B cell (primary cell): ENCODE measurements at regions of chr11 and their contacts with region 1.

Region 1: DNA sequence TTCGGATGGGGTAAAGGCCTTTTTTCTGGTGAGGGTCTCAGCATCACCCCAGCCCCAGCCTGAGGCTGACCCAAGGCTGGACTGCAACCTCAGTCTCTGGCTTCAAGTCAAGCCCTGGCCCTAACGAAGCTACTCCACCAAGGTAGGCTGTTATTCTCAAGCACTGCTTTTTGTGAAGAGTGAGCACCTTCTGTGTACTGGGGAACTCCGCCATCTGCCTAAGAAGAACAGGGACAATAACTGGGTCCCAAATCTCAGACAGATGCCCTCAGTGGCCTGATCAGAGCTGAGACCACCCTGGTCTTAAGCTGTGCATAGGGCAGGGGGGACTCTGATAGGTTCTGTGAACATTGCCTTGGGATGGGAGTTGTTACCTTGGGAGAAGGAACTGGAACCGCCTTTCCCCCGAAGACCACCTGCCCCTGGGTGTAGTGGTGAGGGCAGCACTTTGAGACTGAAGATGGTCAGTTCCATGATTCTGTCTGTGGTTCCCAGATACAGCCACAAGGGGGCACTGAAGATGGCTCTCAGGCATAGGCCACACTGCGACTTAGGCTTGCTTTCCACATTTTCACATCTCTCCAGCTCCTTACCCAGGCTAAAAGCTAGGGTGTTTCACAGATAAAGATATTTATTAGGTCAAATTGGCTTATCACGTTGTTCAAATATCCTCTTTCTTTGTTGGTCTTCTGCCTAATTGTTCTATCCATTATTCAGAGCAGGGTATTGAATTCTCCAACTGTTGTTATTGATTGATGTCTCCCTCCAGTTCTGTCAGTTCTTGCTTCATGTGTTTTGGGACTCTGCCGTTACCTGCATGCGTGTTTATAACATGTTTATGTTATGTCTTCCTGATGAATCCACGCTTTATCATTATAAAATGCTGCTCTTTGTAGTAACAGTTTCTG is 11.8 kb upstream of the UVRAG start:
- DNase-seq: peak; percentile 82
- ATAC-seq: peak; percentile 94
- H3K4me3 ChIP-seq: no peak overlapping the region
- H3K4me3 Mint-ChIP-seq: no peak overlapping the region
- H3K27ac ChIP-seq: no peak overlapping the region
- H3K27ac Mint-ChIP-seq: peak overlapping the region; percentile 32
- H3K4me1 ChIP-seq: peaks cover 3 to 22% of the 10 kb centered on the region in 2 donors
- H3K4me1 Mint-ChIP-seq: peaks cover 17% of the 10 kb centered on the region
- H3K27me3 ChIP-seq: no peaks in the 10 kb centered on the region
- H3K27me3 Mint-ChIP-seq: no peaks in the 10 kb centered on the region
- CTCF ChIP-seq: peak; percentile 96

Region 2: DNA sequence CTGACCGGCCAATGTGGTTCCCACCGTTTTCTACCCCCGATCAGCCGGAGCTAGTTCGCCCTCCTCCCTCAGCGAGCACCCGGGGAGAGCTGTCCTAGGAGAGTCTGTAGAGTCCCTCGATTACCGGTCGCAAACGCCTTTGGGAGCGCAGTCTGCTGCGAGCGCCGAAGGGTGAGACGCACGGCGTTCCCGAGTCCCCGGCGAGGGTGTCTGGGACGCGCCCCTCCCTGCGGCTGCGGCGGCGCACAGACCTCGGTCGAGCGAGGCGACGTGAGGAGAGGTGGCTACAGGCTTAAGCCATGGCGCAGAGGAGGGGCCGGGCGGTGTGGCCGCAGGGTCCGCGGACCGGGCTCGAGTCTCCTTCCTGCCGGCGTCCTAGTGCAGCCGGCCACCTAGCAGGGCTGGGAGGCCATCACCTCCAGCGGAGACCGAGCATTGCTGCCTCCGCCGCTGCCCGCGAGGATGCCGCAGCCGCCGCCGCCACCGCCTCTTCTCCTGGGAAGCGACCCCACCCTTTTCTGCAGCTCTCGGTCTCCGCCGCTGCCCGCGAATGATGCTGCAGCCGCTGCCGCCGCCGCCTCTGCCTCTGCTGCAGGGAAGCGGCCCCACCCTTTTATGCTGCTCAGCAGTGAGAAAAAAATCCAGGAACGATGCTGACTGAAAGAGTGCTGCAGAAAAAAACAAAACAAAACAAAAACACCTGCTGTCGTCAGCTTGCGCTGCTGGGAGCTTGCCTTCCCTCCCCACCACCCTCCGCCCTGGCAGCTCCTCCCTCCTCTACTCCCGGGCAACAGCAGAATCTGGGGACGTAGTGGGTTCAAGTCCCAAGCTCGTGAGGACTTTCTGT is 134.5 kb before region 1 on chr11 and contains the start of gene MAP6:
- CTCF ChIA-PET with region 1: no interaction called
- POLR2A ChIA-PET with region 1: no interaction called
- intact Hi-C with region 1: no loop called
- DNase-seq: peak; percentile 51
- ATAC-seq: peak; percentile 26
- H3K4me3 ChIP-seq: peak within 1 kb of the TSS in 4 of 5 experiments; percentile 34 to 76 (median 50)
- H3K4me3 Mint-ChIP-seq: peak within 1 kb of the TSS; percentile 94
- H3K27ac ChIP-seq: no peak within 1 kb of the TSS
- H3K27ac Mint-ChIP-seq: peak within 1 kb of the TSS; percentile 47
- H3K4me1 ChIP-seq: peaks cover 16 to 22% of the 10 kb centered on the region in 2 donors
- H3K4me1 Mint-ChIP-seq: peaks cover 13% of the 10 kb centered on the region
- H3K27me3 ChIP-seq: peaks cover 0 to 59% (median 43%) of the 10 kb centered on the region in 4 experiments
- H3K27me3 Mint-ChIP-seq: peaks cover 67% of the 10 kb centered on the region
- CTCF ChIP-seq: no peak
- total RNA-seq, gene MAP6: 0.34 and 0.57 TPM in 2 replicates

Region 3: DNA sequence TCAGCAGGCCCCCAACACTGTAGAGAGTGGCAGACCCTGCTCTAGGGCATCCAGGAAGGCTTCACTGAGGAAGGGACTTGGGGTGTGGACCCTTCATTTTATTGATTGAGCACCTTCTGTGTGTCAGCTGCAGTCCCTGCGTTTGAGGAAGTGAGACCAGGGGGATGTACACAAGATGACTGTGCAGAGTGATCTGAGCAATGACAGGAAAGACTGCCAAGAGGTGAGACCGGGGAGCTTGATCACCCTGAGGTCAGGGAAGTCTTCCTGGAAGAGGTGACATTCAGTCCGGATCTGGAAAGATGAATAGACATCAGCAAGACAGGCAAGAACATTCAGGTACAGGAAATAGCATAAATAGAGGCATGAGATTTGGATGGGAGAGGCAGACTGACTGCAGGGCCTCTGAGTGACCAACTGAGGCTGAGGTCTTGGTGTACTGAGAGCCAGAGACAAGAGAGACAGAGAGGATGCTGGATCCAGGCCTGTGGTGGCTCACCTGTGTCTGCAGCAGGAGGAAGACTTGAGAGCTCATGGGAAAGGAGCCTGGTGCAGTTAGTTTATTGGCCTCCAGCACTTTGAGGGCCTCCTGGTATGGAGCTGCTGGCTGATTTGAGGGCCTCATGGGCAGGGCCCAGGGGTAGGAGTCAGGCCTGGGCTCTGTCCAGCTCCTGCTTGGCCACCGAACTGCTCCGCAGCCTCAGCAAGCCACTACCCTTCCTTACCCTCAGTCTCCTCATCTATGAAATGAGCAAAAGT is 29.4 kb before region 1 on chr11:
- CTCF ChIA-PET with region 1: interaction called, 9 read pairs
- POLR2A ChIA-PET with region 1: no interaction called
- intact Hi-C with region 1: loop called (anchors 2 kb)
- DNase-seq: peak; percentile 84
- ATAC-seq: peak; percentile 76
- H3K4me3 ChIP-seq: peak overlapping the region in 1 of 5 experiments; percentile 37
- H3K4me3 Mint-ChIP-seq: peak overlapping the region; percentile 33
- H3K27ac ChIP-seq: peak overlapping the region; percentile 77 to 84
- H3K27ac Mint-ChIP-seq: peak overlapping the region; percentile 73
- H3K4me1 ChIP-seq: peaks cover 45 to 70% of the 10 kb centered on the region in 2 donors
- H3K4me1 Mint-ChIP-seq: peaks cover 77% of the 10 kb centered on the region
- H3K27me3 ChIP-seq: no peaks in the 10 kb centered on the region
- H3K27me3 Mint-ChIP-seq: no peaks in the 10 kb centered on the region
- CTCF ChIP-seq: no peak

Region 4: GRCh38 chr11:75826461-75827230 is 23.5 kb after region 1 on chr11:
- CTCF ChIA-PET with region 1: interaction called, 10 read pairs
- POLR2A ChIA-PET with region 1: interaction called, 4 read pairs
- intact Hi-C with region 1: loop called (anchors 1 kb)
- DNase-seq: peak; percentile 41
- ATAC-seq: no peak
- H3K4me3 ChIP-seq: peak overlapping the region in 1 of 5 experiments; percentile 26
- H3K4me3 Mint-ChIP-seq: peak overlapping the region; percentile 52
- H3K27ac ChIP-seq: peak overlapping the region; percentile 79 to 85
- H3K27ac Mint-ChIP-seq: peak overlapping the region; percentile 92
- H3K4me1 ChIP-seq: peaks cover 76 to 81% of the 10 kb centered on the region in 2 donors
- H3K4me1 Mint-ChIP-seq: peaks cover 80% of the 10 kb centered on the region
- H3K27me3 ChIP-seq: no peaks in the 10 kb centered on the region
- H3K27me3 Mint-ChIP-seq: no peaks in the 10 kb centered on the region
- CTCF ChIP-seq: no peak

Region 5: GRCh38 chr11:75850787-75851186 is 47.6 kb after region 1 on chr11:
- CTCF ChIA-PET with region 1: interaction called, 15 read pairs
- POLR2A ChIA-PET with region 1: no interaction called
- intact Hi-C with region 1: no loop called
- DNase-seq: no peak
- ATAC-seq: no peak
- H3K4me3 ChIP-seq: no peak overlapping the region
- H3K4me3 Mint-ChIP-seq: peak overlapping the region; percentile 55
- H3K27ac ChIP-seq: peak overlapping the region; percentile 1 to 52
- H3K27ac Mint-ChIP-seq: peak overlapping the region; percentile 64
- H3K4me1 ChIP-seq: peaks cover 16 to 25% of the 10 kb centered on the region in 2 donors
- H3K4me1 Mint-ChIP-seq: peaks cover 48% of the 10 kb centered on the region
- H3K27me3 ChIP-seq: no peaks in the 10 kb centered on the region
- H3K27me3 Mint-ChIP-seq: no peaks in the 10 kb centered on the region
- CTCF ChIP-seq: no peak

Region 6: DNA sequence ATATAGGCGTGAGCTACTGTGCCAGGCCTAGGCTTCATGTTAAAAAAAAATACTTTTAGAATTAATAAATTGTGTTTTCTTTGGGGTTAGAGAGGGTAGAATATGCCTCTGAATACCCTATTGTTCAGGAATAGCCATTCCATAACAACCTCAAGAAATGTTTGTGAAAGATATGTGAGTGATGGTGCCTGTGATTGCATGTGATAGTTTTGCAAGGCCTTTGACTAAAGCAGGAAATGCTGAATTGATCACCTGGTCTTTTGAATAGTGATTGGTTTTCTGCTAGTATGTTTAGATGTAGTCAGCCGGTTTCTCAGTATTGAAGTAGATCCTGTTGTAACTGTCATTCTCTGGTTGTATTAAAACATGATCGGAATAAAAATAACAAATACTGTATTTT is 85.2 kb after region 1 on chr11:
- CTCF ChIA-PET with region 1: interaction called, 12 read pairs
- POLR2A ChIA-PET with region 1: no interaction called
- intact Hi-C with region 1: no loop called
- DNase-seq: no peak
- ATAC-seq: no peak
- H3K4me3 ChIP-seq: no peak overlapping the region
- H3K4me3 Mint-ChIP-seq: peak overlapping the region; percentile 9
- H3K27ac ChIP-seq: peak overlapping the region in 1 of 2 donors; percentile 84
- H3K27ac Mint-ChIP-seq: peak overlapping the region; percentile 70
- H3K4me1 ChIP-seq: peaks cover 50 to 73% of the 10 kb centered on the region in 2 donors
- H3K4me1 Mint-ChIP-seq: peaks cover 75% of the 10 kb centered on the region
- H3K27me3 ChIP-seq: no peaks in the 10 kb centered on the region
- H3K27me3 Mint-ChIP-seq: no peaks in the 10 kb centered on the region
- CTCF ChIP-seq: no peak

Region 7: DNA sequence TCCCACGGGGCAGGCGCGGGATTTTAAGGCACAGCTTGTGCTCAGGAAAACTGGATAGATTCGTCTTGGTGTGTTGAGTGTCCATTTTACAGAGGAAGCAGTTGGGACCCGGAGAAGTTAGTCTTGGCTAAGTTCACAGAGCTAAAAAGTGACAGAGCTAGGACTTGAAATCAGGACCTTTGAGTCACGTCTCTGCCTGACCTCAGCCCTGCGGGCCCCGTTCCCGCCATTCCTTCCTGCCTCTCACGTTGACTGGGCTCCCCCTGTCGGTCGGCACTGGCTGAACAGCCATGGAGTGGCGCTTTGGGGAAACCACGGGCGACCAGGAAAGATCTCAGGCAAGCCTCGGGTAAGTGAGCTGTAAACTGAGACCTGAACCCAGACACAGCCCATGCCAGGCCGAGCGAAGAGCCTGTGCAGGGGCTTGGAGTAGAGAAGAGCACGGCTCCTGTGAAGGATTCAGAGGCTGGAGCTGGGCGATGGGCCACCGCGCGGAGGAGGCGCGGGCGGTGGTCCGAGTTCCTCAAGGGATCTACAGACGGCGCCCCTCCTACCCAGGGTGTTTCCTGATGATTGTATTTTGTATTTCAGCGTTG is 349.0 kb after region 1 on chr11:
- CTCF ChIA-PET with region 1: interaction called, 19 read pairs
- POLR2A ChIA-PET with region 1: no interaction called
- intact Hi-C with region 1: loop called (anchors 1 kb)
- DNase-seq: peak; percentile 80
- ATAC-seq: peak; percentile 82
- H3K4me3 ChIP-seq: peak overlapping the region; percentile 15 to 55 (median 47)
- H3K4me3 Mint-ChIP-seq: peak overlapping the region; percentile 74
- H3K27ac ChIP-seq: no peak overlapping the region
- H3K27ac Mint-ChIP-seq: peak overlapping the region; percentile 21
- H3K4me1 ChIP-seq: peaks cover 18 to 21% of the 10 kb centered on the region in 2 donors
- H3K4me1 Mint-ChIP-seq: peaks cover 25% of the 10 kb centered on the region
- H3K27me3 ChIP-seq: no peaks in the 10 kb centered on the region
- H3K27me3 Mint-ChIP-seq: no peaks in the 10 kb centered on the region
- CTCF ChIP-seq: peak; percentile 93